ENCODE measurements at regions of chr9 and their contacts with region 1.

Region 1: GRCh38 chr9:137406876-137407589 is 15.9 kb downstream of the EXD3 start:
- DNase-seq: peak; percentile 60
- H3K4me3 Mint-ChIP-seq: no peak overlapping the region
- H3K27ac Mint-ChIP-seq: no peak overlapping the region
- H3K4me1 Mint-ChIP-seq: peaks cover 10% of the 10 kb centered on the region
- H3K27me3 Mint-ChIP-seq: peaks cover 2% of the 10 kb centered on the region

Region 2: GRCh38 chr9:137295238-137295811 is 111.7 kb before region 1 on chr9:
- intact Hi-C with region 1: loop called (anchors 2 kb)
- DNase-seq: peak; percentile 43
- H3K4me3 Mint-ChIP-seq: no peak overlapping the region
- H3K27ac Mint-ChIP-seq: no peak overlapping the region
- H3K4me1 Mint-ChIP-seq: peaks cover 5% of the 10 kb centered on the region
- H3K27me3 Mint-ChIP-seq: peaks cover 34% of the 10 kb centered on the region

Measured in activated T-helper 2 cell treated with anti-CD3 and anti-CD28 coated beads, Interferon-gamma antibody, Interleukin-2, Interleukin-4, amounts not matched to agents 10 μg/mL and 5 μg/mL and 100 μg/mL, durations not matched to agents 14 hours and 24 hours and 36 hours (primary cell).